ENCODE measurements at regions of chr10 and their contacts with region 1.

Region 1: GRCh38 chr10:100009793-100010676 is at the start of gene DNMBP:
- DNase-seq: peak; percentile 75
- H3K4me3 ChIP-seq: peak within 1 kb of the TSS; percentile 75 to 88 (median 77)
- H3K27ac ChIP-seq: peak within 1 kb of the TSS; percentile 69
- H3K4me1 ChIP-seq: peaks cover 33% of the 10 kb centered on the region
- H3K27me3 ChIP-seq: no peaks in the 10 kb centered on the region
- CTCF ChIP-seq: peak; percentile 9 to 26
- total RNA-seq, gene DNMBP: 8.7 to 17.6 TPM

Region 2: GRCh38 chr10:99845837-99846382 is 164.1 kb before region 1 on chr10:
- CTCF ChIA-PET with region 1: no interaction called
- dilution Hi-C with region 1: no loop called
- in situ Hi-C with region 1: no loop called
- intact Hi-C with region 1: loop called (anchors 1 kb)
- DNase-seq: peak; percentile 86
- H3K4me3 ChIP-seq: no peak overlapping the region
- H3K27ac ChIP-seq: no peak overlapping the region
- H3K4me1 ChIP-seq: no peaks in the 10 kb centered on the region
- H3K27me3 ChIP-seq: no peaks in the 10 kb centered on the region
- CTCF ChIP-seq: peak; percentile 90 to 98

Region 3: GRCh38 chr10:99920901-99921300 is 89.1 kb before region 1 on chr10:
- CTCF ChIA-PET with region 1: no interaction called
- dilution Hi-C with region 1: no loop called
- in situ Hi-C with region 1: no loop called
- intact Hi-C with region 1: loop called (anchors 2 kb)
- DNase-seq: peak; percentile 87
- H3K4me3 ChIP-seq: no peak overlapping the region
- H3K27ac ChIP-seq: peak overlapping the region; percentile 51
- H3K4me1 ChIP-seq: peaks cover 40% of the 10 kb centered on the region
- H3K27me3 ChIP-seq: no peaks in the 10 kb centered on the region
- CTCF ChIP-seq: no peak

Region 4: GRCh38 chr10:99976886-99977665 is 33.0 kb before region 1 on chr10:
- CTCF ChIA-PET with region 1: interaction called, 21 read pairs
- dilution Hi-C with region 1: no loop called
- in situ Hi-C with region 1: no loop called
- intact Hi-C with region 1: loop called (anchors 1 kb)
- DNase-seq: peak; percentile 96
- H3K4me3 ChIP-seq: peak overlapping the region in 1 of 3 experiments; percentile 25
- H3K27ac ChIP-seq: peak overlapping the region; percentile 95
- H3K4me1 ChIP-seq: peaks cover 32% of the 10 kb centered on the region
- H3K27me3 ChIP-seq: no peaks in the 10 kb centered on the region
- CTCF ChIP-seq: no peak

Region 5: DNA sequence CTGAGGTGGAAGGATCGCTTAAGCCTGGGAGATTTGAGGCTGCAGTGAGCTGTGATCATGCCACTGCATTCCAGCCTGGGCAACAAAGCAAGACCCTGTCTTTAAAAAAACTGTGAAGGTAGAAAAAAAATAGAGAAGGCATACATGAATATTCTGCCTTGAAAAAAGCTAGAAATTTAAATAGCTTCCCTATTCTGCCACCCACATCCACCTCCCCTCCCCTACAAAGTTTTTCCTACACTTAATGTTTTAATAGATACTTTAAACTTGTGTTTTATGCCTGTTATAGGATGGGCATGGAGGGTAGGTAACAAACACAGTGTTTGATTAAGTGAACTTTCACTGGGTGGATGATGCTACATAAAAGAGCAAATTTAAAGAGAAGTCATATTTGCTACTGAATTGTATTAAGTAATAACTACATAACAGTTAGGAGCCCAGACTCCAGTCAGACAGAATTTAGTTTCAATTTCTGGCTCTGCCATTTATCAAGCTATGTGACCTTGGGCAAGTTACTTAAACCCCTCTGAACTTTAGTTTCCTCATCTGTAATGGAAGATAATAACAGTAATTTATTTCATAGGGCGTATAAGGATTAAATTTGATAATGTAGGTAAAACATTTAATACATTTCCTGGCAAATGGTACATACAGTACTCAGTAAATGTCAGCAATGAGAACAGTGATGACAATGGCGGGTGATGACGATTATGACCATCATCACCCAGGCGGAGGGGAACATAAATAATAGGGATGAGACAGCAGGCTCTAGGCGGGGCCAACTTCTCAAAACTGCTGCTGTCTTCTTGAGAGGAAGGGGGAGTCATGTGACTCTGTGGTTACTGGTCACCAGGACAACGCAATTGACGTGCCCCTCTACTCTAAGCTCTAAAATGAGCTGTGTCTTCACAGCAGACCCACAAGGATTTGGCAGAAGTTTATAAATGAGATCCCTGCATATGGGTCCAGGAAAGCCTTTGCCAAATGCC is 16.0 kb before region 1 on chr10:
- CTCF ChIA-PET with region 1: no interaction called
- dilution Hi-C with region 1: no loop called
- in situ Hi-C with region 1: no loop called
- intact Hi-C with region 1: loop called (anchors 1 kb)
- DNase-seq: no peak
- H3K4me3 ChIP-seq: no peak overlapping the region
- H3K27ac ChIP-seq: peak overlapping the region; percentile 3
- H3K4me1 ChIP-seq: peaks cover 20% of the 10 kb centered on the region
- H3K27me3 ChIP-seq: no peaks in the 10 kb centered on the region
- CTCF ChIP-seq: no peak

Region 6: GRCh38 chr10:100185364-100186252 is 175.6 kb after region 1 on chr10 and contains the start of gene ERLIN1:
- CTCF ChIA-PET with region 1: no interaction called
- dilution Hi-C with region 1: no loop called
- in situ Hi-C with region 1: no loop called
- intact Hi-C with region 1: loop called (anchors 10 kb)
- DNase-seq: peak; percentile 90
- H3K4me3 ChIP-seq: peak within 1 kb of the TSS; percentile 66 to 96 (median 85)
- H3K27ac ChIP-seq: peak within 1 kb of the TSS; percentile 95
- H3K4me1 ChIP-seq: peaks cover 24% of the 10 kb centered on the region
- H3K27me3 ChIP-seq: no peaks in the 10 kb centered on the region
- CTCF ChIP-seq: no peak
- total RNA-seq, gene ERLIN1: 31.5 to 44.3 TPM